Mammary epithelial cell (primary cell): ENCODE measurements at regions of chr1 and their contacts with region 1.

Region 1: GRCh38 chr1:116586741-116587143 is 15.9 kb upstream of the CD58 start:
- DNase-seq: no peak
- H3K4me3 ChIP-seq: no peak overlapping the region
- H3K27ac ChIP-seq: no peak overlapping the region
- H3K4me1 ChIP-seq: peaks cover 10% of the 10 kb centered on the region
- H3K27me3 ChIP-seq: no peaks in the 10 kb centered on the region
- CTCF ChIP-seq: no peak

Region 2: DNA sequence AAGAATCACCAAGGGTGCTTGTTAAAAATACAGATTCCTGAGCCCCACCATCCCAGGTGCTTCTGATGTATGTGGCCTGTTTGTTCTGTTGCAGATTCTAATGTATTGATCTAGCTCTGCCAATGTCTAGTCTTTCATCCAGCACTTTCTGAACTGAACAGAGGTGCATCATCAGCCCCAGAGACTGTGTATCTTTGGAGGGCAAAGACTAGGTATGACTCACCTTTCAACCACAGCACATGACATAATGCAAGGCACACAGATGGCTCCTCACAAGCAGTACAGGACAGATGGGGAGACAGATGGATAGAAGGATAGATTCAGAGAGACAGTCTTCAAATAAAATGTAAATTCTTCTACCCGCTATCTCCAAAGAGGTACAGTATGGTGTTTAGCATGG is 48.2 kb before region 1 on chr1:
- CTCF ChIA-PET with region 1: no interaction called
- dilution Hi-C with region 1: no loop called
- in situ Hi-C with region 1: no loop called
- intact Hi-C with region 1: no loop called
- DNase-seq: peak; percentile 86
- H3K4me3 ChIP-seq: no peak overlapping the region
- H3K27ac ChIP-seq: peak overlapping the region; percentile 69
- H3K4me1 ChIP-seq: peaks cover 51% of the 10 kb centered on the region
- H3K27me3 ChIP-seq: no peaks in the 10 kb centered on the region
- CTCF ChIP-seq: no peak

Region 3: DNA sequence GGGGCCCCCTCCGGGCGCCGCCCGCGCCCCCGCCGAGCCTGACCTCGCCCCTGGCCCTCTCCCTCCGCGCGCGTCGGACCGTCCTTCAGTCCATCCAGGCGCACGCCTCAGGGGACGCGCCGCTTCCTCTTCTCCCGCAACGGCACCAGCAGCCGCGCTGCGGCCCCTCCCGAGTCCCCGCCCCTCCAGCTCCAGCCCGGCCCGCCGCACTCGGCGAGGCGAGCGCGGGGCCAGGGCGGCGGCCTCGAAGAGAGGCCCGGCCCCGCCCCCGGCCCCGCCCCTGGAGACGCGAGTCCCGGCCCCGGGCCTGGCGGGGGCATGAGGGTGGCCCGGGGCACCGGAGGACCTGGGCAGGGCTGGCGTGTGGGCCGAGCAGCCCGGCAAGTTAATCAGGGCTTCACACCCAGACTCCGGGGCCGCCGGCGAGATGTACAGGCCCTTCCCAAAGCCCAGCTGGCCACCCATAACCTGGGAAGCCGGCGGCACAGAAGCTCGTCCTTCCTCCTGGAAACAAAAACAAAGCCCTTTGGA is 80.9 kb after region 1 on chr1 and contains the start of gene IGSF3:
- CTCF ChIA-PET with region 1: no interaction called
- dilution Hi-C with region 1: no loop called
- in situ Hi-C with region 1: loop called in 1 of 2 experiments (anchors 10 kb)
- intact Hi-C with region 1: no loop called
- DNase-seq: peak; percentile 72
- H3K4me3 ChIP-seq: peak within 1 kb of the TSS; percentile 51 to 82 (median 76)
- H3K27ac ChIP-seq: peak within 1 kb of the TSS; percentile 13
- H3K4me1 ChIP-seq: peaks cover 10% of the 10 kb centered on the region
- H3K27me3 ChIP-seq: no peaks in the 10 kb centered on the region
- CTCF ChIP-seq: no peak
- total RNA-seq, gene IGSF3: 32.2 to 134 TPM

Region 4: DNA sequence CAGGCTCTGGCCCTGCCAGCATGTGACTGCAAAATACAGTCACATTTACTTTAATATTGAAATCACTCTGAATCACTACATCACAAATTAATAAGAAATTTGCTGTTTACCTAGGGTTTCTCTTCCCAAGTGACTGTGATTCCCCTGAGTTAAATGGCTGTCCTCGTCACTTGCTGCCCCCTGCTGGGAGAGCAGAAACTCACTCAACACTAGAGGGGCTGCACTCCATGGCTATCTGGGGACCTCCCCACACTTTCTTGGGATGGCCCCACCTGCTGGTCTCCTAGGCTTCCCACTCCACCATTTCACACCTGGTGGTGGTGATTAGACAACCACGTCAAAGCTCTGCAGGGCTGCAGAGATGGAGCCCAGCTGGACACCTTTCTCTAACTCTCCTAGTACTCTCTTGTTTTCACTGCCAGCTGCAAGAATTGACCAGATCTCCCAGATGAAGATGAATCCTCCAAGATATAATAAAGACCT is 230.9 kb after region 1 on chr1:
- CTCF ChIA-PET with region 1: no interaction called
- dilution Hi-C with region 1: no loop called
- in situ Hi-C with region 1: loop called (anchors 10 to 25 kb)
- intact Hi-C with region 1: no loop called
- DNase-seq: peak; percentile 63
- H3K4me3 ChIP-seq: no peak overlapping the region
- H3K27ac ChIP-seq: no peak overlapping the region
- H3K4me1 ChIP-seq: peaks cover 12% of the 10 kb centered on the region
- H3K27me3 ChIP-seq: no peaks in the 10 kb centered on the region
- CTCF ChIP-seq: peak; percentile 78 to 89

Region 5: GRCh38 chr1:117045644-117046043 is 458.9 kb after region 1 on chr1:
- CTCF ChIA-PET with region 1: no interaction called
- dilution Hi-C with region 1: no loop called
- in situ Hi-C with region 1: loop called (anchors 10 to 25 kb)
- intact Hi-C with region 1: no loop called
- DNase-seq: no peak
- H3K4me3 ChIP-seq: no peak overlapping the region
- H3K27ac ChIP-seq: no peak overlapping the region
- H3K4me1 ChIP-seq: no peaks in the 10 kb centered on the region
- H3K27me3 ChIP-seq: no peaks in the 10 kb centered on the region
- CTCF ChIP-seq: no peak